WTC11 (cell line): ENCODE measurements at regions of chr17 and their contacts with region 1.

Region 1: DNA sequence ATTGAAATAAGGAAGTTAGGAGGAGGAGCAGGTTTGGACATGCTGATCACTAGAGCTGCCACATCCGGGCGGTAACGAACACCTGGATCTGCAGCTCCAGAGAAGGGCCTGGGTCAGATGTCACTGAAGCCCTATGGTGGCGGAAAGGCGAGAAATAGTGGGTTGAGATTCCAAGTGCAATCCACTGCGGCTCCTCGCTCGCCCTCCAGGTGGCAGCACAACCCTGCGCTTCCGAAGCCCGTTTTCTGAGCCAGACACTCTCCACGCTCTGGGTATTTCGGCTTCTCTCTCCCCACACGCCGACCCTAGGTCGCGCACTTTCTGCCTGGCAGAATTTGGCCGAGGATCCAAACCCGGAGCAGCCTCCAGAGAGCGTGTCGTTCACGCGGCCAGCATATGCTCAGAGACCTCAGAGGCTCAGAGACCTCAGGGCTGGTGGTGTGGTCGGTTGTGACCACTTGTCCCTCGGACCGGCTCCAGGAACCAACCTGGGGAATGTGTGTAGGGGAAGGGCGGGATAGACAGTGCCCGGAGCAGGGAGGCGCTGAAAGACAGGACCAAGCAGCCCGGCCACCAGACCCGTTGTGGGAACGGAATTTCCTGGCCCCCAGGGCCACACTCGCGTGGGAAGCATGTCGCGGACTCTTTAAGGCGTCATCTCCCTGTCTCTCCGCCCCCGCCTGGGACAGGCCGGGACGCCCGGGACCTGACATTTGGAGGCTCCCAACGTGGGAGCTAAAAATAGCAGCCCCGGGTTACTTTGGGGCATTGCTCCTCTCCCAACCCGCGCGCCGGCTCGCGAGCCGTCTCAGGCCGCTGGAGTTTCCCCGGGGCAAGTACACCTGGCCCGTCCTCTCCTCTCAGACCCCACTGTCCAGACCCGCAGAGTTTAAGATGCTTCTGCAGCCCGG is 744 bp upstream of the SLC2A4 start:
- DNase-seq: peak; percentile 95
- ATAC-seq: peak; percentile 83
- H3K4me3 Mint-ChIP-seq: peak overlapping the region; percentile 82
- H3K27ac Mint-ChIP-seq: peak overlapping the region; percentile 94
- H3K4me1 Mint-ChIP-seq: peaks cover 20% of the 10 kb centered on the region
- H3K27me3 Mint-ChIP-seq: peaks cover 21% of the 10 kb centered on the region
- CTCF ChIP-seq: peak; percentile 77

Region 2: DNA sequence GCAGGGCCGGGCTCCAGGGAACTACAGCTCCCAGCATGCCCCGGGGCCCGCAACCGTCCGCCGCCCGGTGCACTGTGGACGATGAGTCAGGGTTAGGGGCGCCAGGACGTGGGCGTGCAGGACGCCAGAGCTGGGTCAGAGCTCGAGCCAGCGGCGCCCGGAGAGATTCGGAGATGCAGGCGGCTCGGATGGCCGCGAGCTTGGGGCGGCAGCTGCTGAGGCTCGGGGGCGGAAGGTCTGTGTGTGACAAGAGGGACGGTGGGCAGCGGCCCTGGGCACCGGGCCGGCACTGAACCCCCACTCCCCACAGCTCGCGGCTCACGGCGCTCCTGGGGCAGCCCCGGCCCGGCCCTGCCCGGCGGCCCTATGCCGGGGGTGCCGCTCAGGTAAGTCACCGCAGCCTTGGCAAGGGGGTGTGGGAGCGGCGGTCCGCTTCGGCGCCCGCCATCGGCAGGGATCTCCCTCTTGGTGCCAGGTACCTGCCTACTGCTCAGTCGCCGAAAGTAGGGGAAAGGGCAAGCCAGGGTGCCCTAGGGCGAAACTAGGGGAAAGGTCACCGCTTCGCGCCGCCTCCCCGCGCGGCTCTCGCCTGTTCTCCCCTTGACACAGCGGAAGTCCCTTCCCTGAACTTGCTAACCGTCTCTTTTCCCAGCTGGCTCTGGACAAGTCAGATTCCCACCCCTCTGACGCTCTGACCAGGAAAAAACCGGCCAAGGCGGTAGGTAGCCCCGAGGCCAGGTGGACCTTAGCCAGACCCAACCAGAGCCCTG is 60.8 kb before region 1 on chr17 and contains the starts of genes ACADVL and DLG4:
- CTCF ChIA-PET with region 1: interaction called, 17 read pairs
- POLR2A ChIA-PET with region 1: no interaction called
- DNase-seq: peak; percentile 90
- ATAC-seq: peak; percentile 58
- H3K4me3 Mint-ChIP-seq: peak within 1 kb of the TSS; percentile 89
- H3K27ac Mint-ChIP-seq: peak within 1 kb of the TSS; percentile 93
- H3K4me1 Mint-ChIP-seq: peaks cover 48% of the 10 kb centered on the region
- H3K27me3 Mint-ChIP-seq: peaks cover 4% of the 10 kb centered on the region; the same call in 1 of the 2 replicates
- CTCF ChIP-seq: no peak
- total RNA-seq, gene ACADVL: 213 to 236 TPM (median 221 TPM) in 3 replicates
- total RNA-seq, gene DLG4: 47.1 to 59.7 TPM (median 48.0 TPM) in 3 replicates

Region 3: DNA sequence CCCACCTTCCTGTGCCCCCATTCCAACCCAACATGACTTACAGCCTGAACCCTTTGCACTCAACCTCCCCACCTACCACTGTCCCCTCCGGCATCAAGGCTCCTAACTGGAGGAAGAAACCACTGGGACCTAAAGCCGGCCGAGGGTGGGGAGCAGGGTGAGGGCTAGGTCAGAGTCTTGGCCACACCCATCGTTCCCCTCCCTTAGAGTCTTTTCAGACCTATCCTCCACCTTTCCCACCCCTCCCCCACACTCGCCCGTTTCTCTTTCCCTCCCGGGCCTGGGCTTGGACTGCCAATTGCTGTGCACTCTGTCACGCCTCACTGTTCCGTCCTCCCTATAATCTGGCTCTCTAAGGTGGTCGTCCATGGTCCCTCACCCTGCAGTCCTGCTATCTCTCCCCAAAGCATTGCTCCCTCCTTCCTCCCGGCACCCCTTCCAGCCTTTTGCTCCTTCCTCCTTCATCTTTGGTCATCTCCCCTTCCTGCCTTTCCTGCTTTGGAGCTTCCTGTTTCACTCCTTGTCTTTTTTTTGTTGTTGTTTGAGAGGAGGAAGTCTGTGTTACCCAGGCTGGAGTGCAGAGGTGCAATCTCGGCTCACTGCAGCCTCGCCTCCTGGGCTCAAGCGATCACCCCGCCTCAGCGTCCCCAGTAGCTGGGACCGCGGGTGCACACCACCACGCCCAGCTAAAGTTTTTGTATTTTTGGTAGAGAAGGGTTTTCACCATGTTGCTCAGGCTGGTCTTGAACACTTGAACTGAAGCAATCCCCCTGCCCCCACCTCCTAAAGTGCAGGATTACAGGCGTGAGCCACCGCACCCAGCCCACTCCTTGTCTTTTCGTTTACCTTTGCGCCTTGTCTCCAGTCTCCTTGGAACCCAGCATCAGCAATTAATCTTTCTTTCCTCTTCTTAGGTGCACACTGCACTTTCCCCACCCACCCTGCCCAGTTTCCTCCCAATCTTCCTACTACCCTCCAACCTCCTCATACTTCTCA is 17.4 kb before region 1 on chr17:
- CTCF ChIA-PET with region 1: interaction called, 14 read pairs
- POLR2A ChIA-PET with region 1: interaction called, 6 read pairs
- DNase-seq: peak; percentile 93
- ATAC-seq: peak; percentile 65
- H3K4me3 Mint-ChIP-seq: peak overlapping the region; percentile 98
- H3K27ac Mint-ChIP-seq: peak overlapping the region; percentile 100
- H3K4me1 Mint-ChIP-seq: peaks cover 26% of the 10 kb centered on the region
- H3K27me3 Mint-ChIP-seq: no peaks in the 10 kb centered on the region
- CTCF ChIP-seq: no peak

Region 4: GRCh38 chr17:7314719-7315569 is 34.2 kb after region 1 on chr17 and contains the start of gene GPS2:
- CTCF ChIA-PET with region 1: interaction called, 14 read pairs
- POLR2A ChIA-PET with region 1: interaction called, 4 read pairs
- DNase-seq: peak; percentile 92
- ATAC-seq: peak; percentile 55
- H3K4me3 Mint-ChIP-seq: peak within 1 kb of the TSS; percentile 75
- H3K27ac Mint-ChIP-seq: peak within 1 kb of the TSS; percentile 95
- H3K4me1 Mint-ChIP-seq: peaks cover 30% of the 10 kb centered on the region
- H3K27me3 Mint-ChIP-seq: no peaks in the 10 kb centered on the region
- CTCF ChIP-seq: no peak
- total RNA-seq, gene GPS2: 42.2 to 55.9 TPM (median 44.7 TPM) in 3 replicates

Region 5: DNA sequence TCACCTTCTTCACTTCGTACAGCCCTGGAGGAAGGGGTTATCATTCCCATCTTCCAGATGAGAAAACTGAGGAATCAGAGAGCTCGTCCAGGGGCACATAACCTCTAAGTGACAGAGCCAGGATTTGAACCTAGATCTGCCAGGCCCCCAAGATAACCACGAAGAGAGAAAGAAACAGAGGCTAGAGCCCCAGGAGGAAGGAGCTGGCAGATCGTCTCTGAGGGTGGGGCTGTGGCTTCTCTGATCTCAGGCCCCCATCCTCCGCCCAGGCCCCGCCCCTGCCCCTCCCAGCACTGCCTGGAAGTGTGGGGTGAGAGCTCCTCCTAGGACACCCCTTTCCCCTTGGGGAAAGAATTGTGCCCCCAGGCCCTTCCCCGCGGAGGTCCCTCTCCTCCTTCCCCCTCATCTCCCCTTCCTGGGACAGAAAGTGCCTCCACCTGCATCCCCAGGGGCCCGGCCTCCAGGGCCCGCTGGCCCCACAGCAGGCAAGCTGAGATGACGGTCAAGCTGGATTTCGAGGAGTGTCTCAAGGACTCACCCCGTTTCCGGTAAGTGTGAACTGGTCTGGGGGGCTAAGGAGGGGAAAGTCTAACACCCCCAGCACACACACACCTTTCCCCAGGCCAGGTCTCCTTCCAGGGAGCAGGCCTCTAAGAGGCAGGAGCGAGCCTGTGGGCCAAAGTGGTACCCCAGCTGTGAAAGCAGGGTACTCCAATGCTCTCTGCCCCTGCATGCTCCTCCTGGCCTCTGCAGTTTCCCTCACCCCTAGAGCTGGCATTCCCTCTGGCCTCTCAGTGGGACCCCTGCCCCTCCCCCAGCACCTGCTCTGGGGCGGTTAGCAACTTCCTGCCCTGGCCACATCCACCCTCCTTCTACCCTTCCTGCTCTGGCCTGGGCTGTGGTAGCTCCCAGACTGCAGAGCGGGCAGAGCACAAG is 55.7 kb after region 1 on chr17 and contains the start of gene ACAP1:
- CTCF ChIA-PET with region 1: interaction called, 20 read pairs
- POLR2A ChIA-PET with region 1: interaction called, 4 read pairs
- DNase-seq: peak; percentile 78
- ATAC-seq: peak; percentile 96
- H3K4me3 Mint-ChIP-seq: peak within 1 kb of the TSS; percentile 63
- H3K27ac Mint-ChIP-seq: peak within 1 kb of the TSS; percentile 98
- H3K4me1 Mint-ChIP-seq: peaks cover 34% of the 10 kb centered on the region
- H3K27me3 Mint-ChIP-seq: no peaks in the 10 kb centered on the region
- CTCF ChIP-seq: no peak
- total RNA-seq, gene ACAP1: 58.6 to 63.9 TPM (median 60.6 TPM) in 3 replicates

Region 6: DNA sequence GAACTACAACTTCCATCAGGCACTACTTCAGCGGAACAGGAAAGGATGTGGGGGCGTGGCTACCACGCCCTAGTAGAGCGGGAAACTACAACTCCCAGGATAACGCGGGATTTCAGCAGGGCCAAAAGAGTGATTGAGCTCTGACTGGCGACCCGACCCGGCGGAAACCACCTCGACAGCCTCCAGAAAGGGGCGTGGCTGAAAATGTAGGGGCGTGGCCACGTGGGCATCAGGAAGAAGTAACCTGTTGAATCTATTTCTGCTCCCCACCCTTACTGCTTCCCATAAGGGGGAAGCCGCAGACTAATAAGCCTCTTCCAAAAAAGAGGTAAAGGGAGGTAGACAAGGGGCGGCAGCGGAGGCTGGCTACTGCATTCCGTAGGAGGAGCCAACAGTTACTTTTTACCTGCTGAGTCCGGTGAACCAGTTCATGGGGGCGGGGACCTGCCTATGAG is 154.5 kb after region 1 on chr17 and contains the start of gene TMEM102:
- CTCF ChIA-PET with region 1: interaction called, 13 read pairs
- POLR2A ChIA-PET with region 1: no interaction called
- DNase-seq: peak; percentile 98
- ATAC-seq: peak; percentile 71
- H3K4me3 Mint-ChIP-seq: peak within 1 kb of the TSS; percentile 90
- H3K27ac Mint-ChIP-seq: peak within 1 kb of the TSS; percentile 98
- H3K4me1 Mint-ChIP-seq: peaks cover 17% of the 10 kb centered on the region
- H3K27me3 Mint-ChIP-seq: peaks cover 17% of the 10 kb centered on the region
- CTCF ChIP-seq: no peak
- total RNA-seq, gene TMEM102: 13.5 to 15.3 TPM (median 13.9 TPM) in 3 replicates